ENCODE measurements at regions of chr12 and their contacts with region 1.

Region 1: DNA sequence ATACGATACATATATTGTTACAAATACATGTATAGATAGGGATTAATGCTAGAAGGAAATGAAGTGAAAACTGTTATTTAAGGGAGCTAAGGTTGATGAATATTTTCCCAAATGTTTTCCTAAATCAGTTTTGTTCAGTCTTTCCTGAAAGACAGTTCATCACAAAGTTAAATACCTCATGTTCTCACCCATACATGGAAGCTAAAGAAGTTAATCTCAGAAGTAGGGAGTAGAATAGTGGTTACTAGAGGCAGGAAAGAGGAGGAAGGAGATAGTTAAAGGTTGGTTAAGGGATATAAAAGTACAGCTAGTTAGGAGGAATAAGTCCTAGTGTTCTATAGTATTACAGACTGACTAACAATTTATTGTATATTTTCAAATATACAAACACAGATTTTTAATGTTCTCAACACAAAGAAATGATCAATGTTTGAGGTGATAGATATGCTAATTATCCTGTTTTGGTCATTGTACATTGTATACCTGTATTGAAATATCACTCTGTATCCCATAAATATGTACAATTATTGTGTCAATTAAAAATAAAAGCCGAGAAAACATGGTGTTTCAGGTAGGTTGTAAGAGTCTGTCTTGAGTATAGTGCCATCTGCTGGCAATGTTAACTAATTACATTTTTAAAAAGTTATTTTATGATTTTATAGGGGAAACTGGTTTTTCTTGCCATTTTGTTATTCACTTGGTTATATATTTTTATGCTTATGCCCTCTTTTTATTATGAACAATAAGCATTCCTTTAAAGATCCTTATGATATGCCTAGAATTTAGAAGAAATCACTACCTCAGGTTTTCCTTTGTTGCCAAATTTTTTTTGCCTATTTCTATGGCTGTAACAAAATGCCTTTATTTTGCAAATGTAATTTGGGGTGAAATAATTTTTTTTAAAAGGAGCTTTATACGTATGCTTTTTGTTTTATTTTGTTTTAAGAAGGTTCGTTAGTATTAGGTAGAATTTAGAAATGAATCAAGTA is 26.9 kb downstream of the ZDHHC17 start:
- H3K4me3 ChIP-seq: no peak overlapping the region
- H3K27ac ChIP-seq: no peak overlapping the region
- H3K4me1 ChIP-seq: no peaks in the 10 kb centered on the region
- CTCF ChIP-seq: peak; percentile 26; the same call in 1 of the 2 replicates

Region 2: GRCh38 chr12:76621582-76622024 is 169.3 kb before region 1 on chr12:
- CTCF ChIA-PET with region 1: interaction called, 39 read pairs
- POLR2A ChIA-PET with region 1: no interaction called
- H3K4me3 ChIP-seq: no peak overlapping the region
- H3K27ac ChIP-seq: no peak overlapping the region
- H3K4me1 ChIP-seq: no peaks in the 10 kb centered on the region
- CTCF ChIP-seq: peak; percentile 80

Region 3: DNA sequence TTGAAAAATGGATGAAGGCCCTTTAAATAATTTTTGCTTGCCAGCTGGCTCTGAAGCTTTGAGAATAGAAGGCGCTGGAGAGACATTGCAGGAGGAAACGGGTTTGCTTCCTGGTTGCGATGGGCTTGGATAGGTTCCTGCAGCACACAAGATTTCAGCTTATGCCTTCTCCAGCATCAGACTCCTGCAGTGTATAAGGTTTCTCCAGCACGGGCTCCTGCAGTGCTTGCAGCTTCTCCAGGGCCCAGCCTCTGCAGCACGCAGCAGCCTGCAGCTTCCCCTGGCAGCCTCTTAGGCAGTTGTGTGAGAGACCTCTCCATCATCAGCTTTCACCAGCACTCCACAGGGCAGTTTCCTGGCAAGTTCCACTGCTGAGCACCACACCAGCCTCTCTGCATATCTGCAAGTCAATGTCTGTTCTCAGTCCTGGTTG is 105.6 kb before region 1 on chr12:
- CTCF ChIA-PET with region 1: interaction called, 10 read pairs
- POLR2A ChIA-PET with region 1: no interaction called
- H3K4me3 ChIP-seq: no peak overlapping the region
- H3K27ac ChIP-seq: no peak overlapping the region
- H3K4me1 ChIP-seq: peaks cover 10% of the 10 kb centered on the region
- CTCF ChIP-seq: no peak

Region 4: DNA sequence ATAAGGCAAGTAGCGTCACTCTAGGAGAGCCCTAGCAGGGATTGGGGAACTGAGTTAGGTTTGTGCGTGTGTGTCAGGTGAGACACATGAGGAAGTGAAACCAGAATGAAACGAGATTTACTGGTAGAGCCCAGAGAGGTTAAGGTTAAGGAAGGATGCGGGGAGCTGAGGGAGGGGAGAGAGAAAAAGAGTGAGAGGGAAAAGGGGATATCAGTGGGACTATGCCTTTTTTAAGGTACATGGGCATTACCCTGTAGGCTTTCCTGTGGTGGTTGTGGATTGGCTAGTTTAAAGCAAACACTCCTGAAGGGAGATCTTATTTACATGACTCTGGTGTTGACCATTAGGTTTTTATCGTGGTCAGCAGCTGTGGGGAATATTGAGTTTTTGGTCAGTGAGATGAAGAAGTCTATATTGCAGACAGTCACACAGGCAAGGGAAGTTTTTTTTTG is 13.1 kb before region 1 on chr12:
- CTCF ChIA-PET with region 1: interaction called, 12 read pairs
- POLR2A ChIA-PET with region 1: no interaction called
- H3K4me3 ChIP-seq: no peak overlapping the region
- H3K27ac ChIP-seq: no peak overlapping the region
- H3K4me1 ChIP-seq: peaks cover 11% of the 10 kb centered on the region
- CTCF ChIP-seq: no peak

Region 5: GRCh38 chr12:76820888-76821482 is 30.1 kb after region 1 on chr12:
- CTCF ChIA-PET with region 1: interaction called, 15 read pairs
- POLR2A ChIA-PET with region 1: no interaction called
- H3K4me3 ChIP-seq: no peak overlapping the region
- H3K27ac ChIP-seq: no peak overlapping the region
- H3K4me1 ChIP-seq: no peaks in the 10 kb centered on the region
- CTCF ChIP-seq: no peak

Region 6: GRCh38 chr12:77001181-77001758 is 210.4 kb after region 1 on chr12:
- CTCF ChIA-PET with region 1: no interaction called
- POLR2A ChIA-PET with region 1: no interaction called
- H3K4me3 ChIP-seq: no peak overlapping the region
- H3K27ac ChIP-seq: no peak overlapping the region
- H3K4me1 ChIP-seq: no peaks in the 10 kb centered on the region
- CTCF ChIP-seq: no peak

Measured in HEK293 (cell line).